ENCODE measurements at regions of chr5 and their contacts with region 1.

Region 1: DNA sequence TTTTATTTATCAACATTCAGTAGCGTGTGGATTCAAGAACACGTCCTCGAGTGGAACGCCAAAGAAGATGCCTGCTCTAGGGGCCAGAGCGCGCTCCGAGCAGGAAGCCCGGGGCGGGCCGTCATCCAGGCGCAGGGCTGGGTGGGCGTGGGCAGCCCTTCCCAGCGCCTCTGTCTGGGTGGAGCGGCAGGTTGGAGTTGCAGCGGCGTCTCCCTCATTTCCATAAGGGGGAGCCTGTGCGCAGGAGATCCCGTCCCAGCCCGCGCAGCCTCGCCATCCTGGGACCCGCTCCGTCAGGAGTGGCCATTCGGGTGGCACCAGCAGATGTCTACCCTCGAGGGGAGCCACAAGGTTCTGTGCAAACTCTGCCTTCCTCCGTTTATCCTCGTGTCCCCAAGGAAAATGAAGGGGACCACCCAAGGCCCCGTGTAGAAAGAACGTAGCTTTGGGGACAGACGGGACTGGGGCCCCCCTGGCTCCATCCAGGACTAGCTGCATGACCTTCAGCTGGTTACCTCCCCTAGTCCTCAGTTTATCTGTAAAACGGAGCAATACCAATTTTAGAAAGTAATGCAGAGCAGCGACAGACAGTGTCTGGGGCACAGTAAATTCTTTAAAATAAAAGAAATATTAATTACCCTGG is 155.5 kb upstream of the SMIM23 start:
- DNase-seq: peak; percentile 73 to 82 (median 82)
- ATAC-seq: peak; percentile 89 to 95
- H3K4me3 ChIP-seq: no peak overlapping the region
- H3K27ac ChIP-seq: no peak overlapping the region
- H3K4me1 ChIP-seq: no peaks in the 10 kb centered on the region
- H3K27me3 ChIP-seq: no peaks in the 10 kb centered on the region

Region 2: GRCh38 chr5:171850324-171851285 is 220.5 kb after region 1 on chr5:
- intact Hi-C with region 1: loop called (anchors 5 to 10 kb)
- DNase-seq: no peak
- ATAC-seq: peak; percentile 38 to 39
- H3K4me3 ChIP-seq: no peak overlapping the region
- H3K27ac ChIP-seq: no peak overlapping the region
- H3K4me1 ChIP-seq: no peaks in the 10 kb centered on the region
- H3K27me3 ChIP-seq: no peaks in the 10 kb centered on the region

Region 3: GRCh38 chr5:171907725-171908343 is 277.7 kb after region 1 on chr5:
- intact Hi-C with region 1: loop called in 2 of 4 experiments (anchors 10 kb)
- DNase-seq: no peak
- ATAC-seq: peak; percentile 79 to 85
- H3K4me3 ChIP-seq: no peak overlapping the region
- H3K27ac ChIP-seq: no peak overlapping the region
- H3K4me1 ChIP-seq: peaks cover 2% of the 10 kb centered on the region
- H3K27me3 ChIP-seq: no peaks in the 10 kb centered on the region

Measured in right cardiac atrium (tissue), 5 donors.